CD8-positive, alpha-beta T cell (primary cell): ENCODE measurements at regions of chr1 and their contacts with region 1.

Region 1: DNA sequence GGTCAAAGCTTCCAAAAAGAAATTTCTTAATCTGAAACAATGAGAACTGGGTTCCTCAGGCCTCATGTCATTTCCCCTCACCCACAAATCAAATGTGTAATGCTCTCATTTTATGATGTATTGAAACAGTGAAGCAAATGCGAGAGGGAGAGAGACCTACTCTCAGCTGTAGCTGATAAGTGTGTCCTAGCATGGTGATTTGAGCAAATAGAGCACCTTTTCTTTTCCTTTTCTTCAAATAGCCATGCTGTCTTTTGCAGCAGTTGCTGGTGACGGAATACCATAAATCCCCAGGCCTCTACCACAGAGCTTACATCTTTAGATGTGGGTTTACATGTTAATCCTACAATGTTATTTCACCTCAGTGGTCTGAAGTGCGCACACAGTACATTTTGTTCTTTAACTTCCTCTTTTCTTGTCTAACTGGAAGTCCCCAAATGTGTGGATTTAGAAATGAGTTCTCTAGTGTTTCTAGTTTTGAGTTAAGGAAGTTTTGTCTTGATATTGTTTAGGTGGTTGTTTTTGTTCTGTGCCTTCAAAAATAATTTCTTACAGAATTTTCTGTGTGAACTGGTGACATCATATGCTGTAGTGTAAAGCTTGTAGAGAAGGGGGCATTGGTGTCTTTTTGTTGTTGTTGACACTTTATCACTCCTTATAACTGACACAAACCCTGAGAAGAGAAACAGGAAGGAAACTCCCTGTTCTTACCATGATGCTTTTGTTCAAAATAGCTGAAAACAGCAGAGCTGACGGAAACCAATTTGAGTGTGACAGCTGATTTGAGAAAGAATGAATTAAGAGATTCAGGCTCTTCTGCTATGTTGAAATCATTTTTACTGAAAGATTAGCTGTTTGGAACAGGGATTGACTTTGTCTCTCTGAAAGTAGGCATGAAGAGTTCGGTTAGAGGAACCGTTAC is 12.2 kb downstream of the SMAP2 start:
- DNase-seq: peak in 7 of 9 experiments; percentile 34 to 96 (median 64)
- ATAC-seq: peak; percentile 66
- H3K4me3 ChIP-seq: peak overlapping the region; percentile 29 to 50
- H3K4me3 Mint-ChIP-seq: peak overlapping the region; percentile 86
- H3K27ac ChIP-seq: peak overlapping the region; percentile 93 to 97
- H3K27ac Mint-ChIP-seq: peak overlapping the region; percentile 100
- H3K4me1 ChIP-seq: peaks cover 82% of the 10 kb centered on the region
- H3K4me1 Mint-ChIP-seq: peaks cover 92% of the 10 kb centered on the region
- H3K27me3 ChIP-seq: no peaks in the 10 kb centered on the region
- H3K27me3 Mint-ChIP-seq: no peaks in the 10 kb centered on the region
- CTCF ChIP-seq: no peak

Region 2: GRCh38 chr1:40143891-40144575 is 241.7 kb before region 1 on chr1:
- CTCF ChIA-PET with region 1: interaction called, 11 read pairs
- POLR2A ChIA-PET with region 1: no interaction called
- intact Hi-C with region 1: no loop called
- DNase-seq: peak; percentile 10 to 82 (median 51)
- ATAC-seq: peak; percentile 74
- H3K4me3 ChIP-seq: no peak overlapping the region
- H3K4me3 Mint-ChIP-seq: no peak overlapping the region
- H3K27ac ChIP-seq: no peak overlapping the region
- H3K27ac Mint-ChIP-seq: no peak overlapping the region
- H3K4me1 ChIP-seq: peaks cover 3% of the 10 kb centered on the region
- H3K4me1 Mint-ChIP-seq: peaks cover 6% of the 10 kb centered on the region
- H3K27me3 ChIP-seq: no peaks in the 10 kb centered on the region
- H3K27me3 Mint-ChIP-seq: peaks cover 20% of the 10 kb centered on the region
- CTCF ChIP-seq: peak; percentile 73

Region 3: DNA sequence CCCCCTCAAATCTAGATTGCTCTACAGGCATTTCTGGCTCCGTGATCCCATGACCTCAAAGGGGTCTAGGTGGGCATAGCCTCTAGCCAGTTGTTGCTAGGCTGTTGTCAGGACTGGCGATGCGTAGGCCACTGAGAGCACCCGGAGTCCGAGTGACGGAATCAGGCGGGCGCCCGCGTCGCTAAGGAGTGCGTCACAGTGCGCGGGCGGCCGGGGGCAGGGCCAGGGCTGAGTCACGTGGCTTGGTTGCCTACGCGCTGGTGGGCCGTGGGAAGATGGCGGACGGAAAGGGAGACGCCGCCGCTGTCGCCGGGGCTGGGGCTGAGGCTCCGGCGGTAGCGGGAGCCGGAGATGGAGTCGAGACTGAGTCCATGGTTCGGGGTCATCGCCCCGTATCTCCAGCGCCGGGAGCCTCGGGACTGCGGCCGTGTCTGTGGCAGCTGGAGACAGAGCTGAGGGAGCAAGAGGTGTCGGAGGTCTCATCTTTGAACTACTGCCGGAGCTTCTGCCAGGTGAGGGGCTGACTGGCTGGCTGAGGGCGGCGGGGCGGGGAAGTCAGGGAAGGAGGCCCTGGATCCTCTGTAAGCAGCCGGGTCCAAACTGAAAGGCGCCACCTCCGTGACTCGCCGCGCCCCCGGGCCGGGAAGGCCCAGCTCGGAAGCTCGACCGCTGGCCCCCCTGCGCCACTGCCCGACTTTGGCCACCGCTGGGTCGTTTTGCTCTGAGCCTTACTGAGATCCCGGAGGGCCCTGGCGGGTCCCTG is 224.4 kb before region 1 on chr1 and contains the start of gene RLF:
- CTCF ChIA-PET with region 1: no interaction called
- POLR2A ChIA-PET with region 1: no interaction called
- intact Hi-C with region 1: loop called in 1 of 2 experiments (anchors 5 kb)
- DNase-seq: peak; percentile 90 to 97 (median 94)
- ATAC-seq: peak; percentile 95
- H3K4me3 ChIP-seq: peak within 1 kb of the TSS; percentile 96 to 100
- H3K4me3 Mint-ChIP-seq: no peak within 1 kb of the TSS
- H3K27ac ChIP-seq: peak within 1 kb of the TSS; percentile 96 to 98
- H3K27ac Mint-ChIP-seq: no peak within 1 kb of the TSS
- H3K4me1 ChIP-seq: peaks cover 46% of the 10 kb centered on the region
- H3K4me1 Mint-ChIP-seq: peaks cover 22% of the 10 kb centered on the region
- H3K27me3 ChIP-seq: no peaks in the 10 kb centered on the region
- H3K27me3 Mint-ChIP-seq: no peaks in the 10 kb centered on the region
- CTCF ChIP-seq: no peak
- total RNA-seq, gene RLF: 62.2 to 62.6 TPM

Region 4: DNA sequence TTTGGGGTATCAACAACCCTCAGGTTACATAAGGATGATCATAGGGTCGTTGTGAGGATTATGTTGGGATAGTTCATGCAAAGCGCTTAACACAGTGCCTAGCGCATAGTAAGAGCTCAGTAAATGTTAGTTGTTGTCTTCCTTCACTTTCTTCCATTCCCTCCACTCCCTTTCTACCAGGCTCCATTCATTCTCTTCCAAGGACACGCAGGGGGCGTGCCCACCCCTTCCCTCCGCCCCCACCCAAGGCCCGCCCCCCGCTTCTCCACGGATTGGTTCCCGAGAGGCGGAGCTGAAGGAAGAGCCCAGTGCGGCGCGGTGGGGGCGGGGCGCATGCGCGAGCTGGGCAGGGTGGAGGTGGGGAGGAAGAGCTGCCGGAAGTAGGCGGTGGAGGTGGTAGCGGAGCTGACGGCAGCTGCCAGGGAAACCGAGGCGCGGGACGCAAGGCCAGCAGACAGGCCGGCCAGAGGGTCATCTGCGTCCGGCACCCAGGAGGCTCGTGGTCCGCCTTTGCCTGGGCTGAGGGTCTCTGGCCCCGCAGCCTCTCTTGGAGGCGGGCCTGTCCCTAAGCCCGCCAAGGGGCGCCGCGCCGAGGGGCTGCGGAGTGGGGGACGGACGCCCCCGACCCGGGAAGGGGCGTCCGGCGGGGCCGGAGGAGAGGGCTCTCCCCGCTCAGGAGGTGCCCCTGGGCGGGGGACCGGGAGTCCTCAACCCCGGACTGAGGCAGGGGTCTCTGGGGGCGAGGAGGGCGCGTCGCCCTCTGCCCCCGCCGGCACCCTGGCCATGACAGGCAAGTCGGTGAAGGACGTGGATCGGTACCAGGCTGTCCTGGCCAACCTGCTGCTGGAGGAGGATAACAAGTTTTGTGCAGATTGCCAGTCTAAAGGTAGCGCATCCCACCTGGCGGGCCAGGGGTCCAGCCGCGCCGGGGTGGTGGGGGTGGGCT is 12.1 kb before region 1 on chr1 and contains the start of gene SMAP2:
- CTCF ChIA-PET with region 1: interaction called, 32 read pairs
- POLR2A ChIA-PET with region 1: interaction called, 98 read pairs
- intact Hi-C with region 1: loop called in 1 of 2 experiments (anchors 1 kb)
- DNase-seq: peak; percentile 91 to 98 (median 95)
- ATAC-seq: peak; percentile 80
- H3K4me3 ChIP-seq: peak within 1 kb of the TSS; percentile 81 to 100
- H3K4me3 Mint-ChIP-seq: peak within 1 kb of the TSS; percentile 100
- H3K27ac ChIP-seq: peak within 1 kb of the TSS; percentile 96 to 97
- H3K27ac Mint-ChIP-seq: peak within 1 kb of the TSS; percentile 99
- H3K4me1 ChIP-seq: peaks cover 35% of the 10 kb centered on the region
- H3K4me1 Mint-ChIP-seq: peaks cover 54% of the 10 kb centered on the region
- H3K27me3 ChIP-seq: no peaks in the 10 kb centered on the region
- H3K27me3 Mint-ChIP-seq: no peaks in the 10 kb centered on the region
- CTCF ChIP-seq: no peak
- total RNA-seq, gene SMAP2: 167 to 171 TPM

Region 5: DNA sequence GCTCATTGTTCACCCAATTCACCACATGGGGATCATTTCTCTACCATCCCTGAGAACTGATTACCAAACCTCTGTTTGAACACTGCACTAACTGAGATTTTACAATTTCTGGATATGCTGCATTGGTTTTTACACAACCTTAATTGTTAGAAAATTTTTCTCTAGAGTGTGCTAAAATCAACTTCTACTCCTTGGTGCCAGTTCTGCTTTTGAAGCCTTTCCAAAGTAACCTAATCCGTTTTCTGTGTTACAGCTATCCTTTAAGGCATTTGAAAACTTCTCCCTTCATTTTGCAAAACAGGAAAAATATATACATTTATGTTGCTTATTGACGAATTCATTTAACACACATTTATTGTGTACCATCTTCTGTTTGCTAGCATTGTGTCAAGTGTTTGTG is 11.6 kb after region 1 on chr1:
- CTCF ChIA-PET with region 1: interaction called, 19 read pairs
- POLR2A ChIA-PET with region 1: interaction called, 17 read pairs
- intact Hi-C with region 1: loop called in 1 of 2 experiments (anchors 1 kb)
- DNase-seq: no peak
- ATAC-seq: no peak
- H3K4me3 ChIP-seq: peak overlapping the region in 1 of 2 experiments; percentile 18
- H3K4me3 Mint-ChIP-seq: peak overlapping the region; percentile 47
- H3K27ac ChIP-seq: peak overlapping the region in 1 of 2 experiments; percentile 83
- H3K27ac Mint-ChIP-seq: peak overlapping the region; percentile 93
- H3K4me1 ChIP-seq: peaks cover 93% of the 10 kb centered on the region
- H3K4me1 Mint-ChIP-seq: peaks cover 92% of the 10 kb centered on the region
- H3K27me3 ChIP-seq: no peaks in the 10 kb centered on the region
- H3K27me3 Mint-ChIP-seq: no peaks in the 10 kb centered on the region
- CTCF ChIP-seq: no peak